Activated naive CD4-positive, alpha-beta T cell treated with anti-CD3 and anti-CD28 coated beads, Interleukin-2, amount 10 ng/mL, durations not matched to agents 7 days and 5 days (primary cell): ENCODE measurements at regions of chr10 and their contacts with region 1.

Region 1: GRCh38 chr10:6083523-6084475 is 5.0 kb upstream of the RBM17 start:
- DNase-seq: peak; percentile 74
- H3K4me3 Mint-ChIP-seq: peak overlapping the region; percentile 75
- H3K27ac Mint-ChIP-seq: peak overlapping the region; percentile 96
- H3K4me1 Mint-ChIP-seq: peaks cover 78% of the 10 kb centered on the region
- H3K27me3 Mint-ChIP-seq: peaks cover 4% of the 10 kb centered on the region

Region 2: GRCh38 chr10:5889624-5890451 is 194.0 kb before region 1 on chr10 and contains the starts of genes ANKRD16 and FBH1:
- CTCF ChIA-PET with region 1: no interaction called
- DNase-seq: peak; percentile 97
- H3K4me3 Mint-ChIP-seq: peak within 1 kb of the TSS; percentile 90
- H3K27ac Mint-ChIP-seq: peak within 1 kb of the TSS; percentile 82
- H3K4me1 Mint-ChIP-seq: peaks cover 54% of the 10 kb centered on the region
- H3K27me3 Mint-ChIP-seq: no peaks in the 10 kb centered on the region

Region 3: GRCh38 chr10:6068422-6068821 is 15.4 kb before region 1 on chr10:
- CTCF ChIA-PET with region 1: interaction called, 69 read pairs
- DNase-seq: peak; percentile 82
- H3K4me3 Mint-ChIP-seq: peak overlapping the region; percentile 70
- H3K27ac Mint-ChIP-seq: peak overlapping the region; percentile 97
- H3K4me1 Mint-ChIP-seq: peaks cover 95% of the 10 kb centered on the region
- H3K27me3 Mint-ChIP-seq: no peaks in the 10 kb centered on the region